GM12878 (cell line): ENCODE measurements at regions of chr20 and their contacts with region 1.

Region 1: GRCh38 chr20:17898548-17898994 is 70.0 kb downstream of the SNX5 start:
- DNase-seq: no peak
- ATAC-seq: peak; percentile 54
- H3K4me3 ChIP-seq: no peak overlapping the region
- H3K27ac ChIP-seq: no peak overlapping the region
- H3K4me1 ChIP-seq: peaks cover 35% of the 10 kb centered on the region
- H3K27me3 ChIP-seq: no peaks in the 10 kb centered on the region
- CTCF ChIP-seq: peak; percentile 89 to 94 (median 91)
- EP300 ChIP-seq: no peak
- POLR2A ChIP-seq: no peak
- RAD21 ChIP-seq: peak; percentile 100

Region 2: DNA sequence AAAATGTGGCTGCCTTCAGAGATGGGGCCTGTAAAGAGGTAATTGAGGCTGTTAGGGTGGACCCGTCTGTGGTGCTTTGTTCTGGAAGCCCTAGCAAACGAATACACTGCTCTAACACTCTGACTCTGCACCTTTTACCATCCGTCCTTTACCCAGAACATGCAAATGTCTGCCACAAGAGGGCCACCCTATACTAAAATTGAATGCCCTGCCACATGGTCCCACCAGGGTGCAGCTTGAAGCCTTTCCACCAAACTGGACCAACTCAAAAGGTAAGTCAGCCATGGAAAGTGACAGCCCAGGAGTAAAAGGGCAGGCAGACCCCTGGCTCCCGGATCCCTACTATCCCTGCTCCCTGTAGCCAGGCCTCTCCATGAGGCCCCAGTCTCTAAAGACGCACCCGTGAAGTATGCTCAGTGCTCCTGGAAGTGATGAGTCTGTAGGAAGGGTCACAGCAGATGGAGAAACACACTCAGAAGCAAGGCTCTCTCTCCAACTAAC is 361.6 kb before region 1 on chr20:
- CTCF ChIA-PET with region 1: interaction called, 20 read pairs
- POLR2A ChIA-PET with region 1: no interaction called
- RAD21 ChIA-PET with region 1: interaction called, 12 read pairs
- SMC1A ChIA-PET with region 1: interaction called, 14 read pairs
- in situ Hi-C with region 1: no loop called
- intact Hi-C with region 1: loop called (anchors 2 kb)
- DNase-seq: no peak
- ATAC-seq: peak; percentile 98
- H3K4me3 ChIP-seq: no peak overlapping the region
- H3K27ac ChIP-seq: no peak overlapping the region
- H3K4me1 ChIP-seq: peaks cover 6% of the 10 kb centered on the region
- H3K27me3 ChIP-seq: no peaks in the 10 kb centered on the region
- CTCF ChIP-seq: peak; percentile 83 to 93 (median 84)
- EP300 ChIP-seq: no peak
- POLR2A ChIP-seq: no peak
- RAD21 ChIP-seq: peak; percentile 95

Region 3: GRCh38 chr20:17825960-17826843 is 72.4 kb before region 1 on chr20:
- CTCF ChIA-PET with region 1: interaction called, 9 read pairs
- POLR2A ChIA-PET with region 1: interaction called, 5 read pairs
- RAD21 ChIA-PET with region 1: interaction called, 3 read pairs
- SMC1A ChIA-PET with region 1: interaction called, 6 read pairs
- in situ Hi-C with region 1: no loop called
- intact Hi-C with region 1: loop called (anchors 5 kb)
- DNase-seq: peak; percentile 74
- ATAC-seq: peak; percentile 96
- H3K4me3 ChIP-seq: no peak overlapping the region
- H3K27ac ChIP-seq: peak overlapping the region; percentile 69
- H3K4me1 ChIP-seq: peaks cover 18% of the 10 kb centered on the region
- H3K27me3 ChIP-seq: no peaks in the 10 kb centered on the region
- CTCF ChIP-seq: no peak
- EP300 ChIP-seq: peak; percentile 59 to 94; a peak in 3 of 4 replicates
- POLR2A ChIP-seq: no peak
- RAD21 ChIP-seq: peak; percentile 16; the same call in 1 of the 2 replicates

Region 4: GRCh38 chr20:17885544-17885943 is 13.0 kb before region 1 on chr20:
- CTCF ChIA-PET with region 1: interaction called, 3 read pairs
- POLR2A ChIA-PET with region 1: no interaction called
- RAD21 ChIA-PET with region 1: interaction called, 11 read pairs
- SMC1A ChIA-PET with region 1: interaction called, 10 read pairs
- in situ Hi-C with region 1: no loop called
- intact Hi-C with region 1: no loop called
- DNase-seq: no peak
- ATAC-seq: no peak
- H3K4me3 ChIP-seq: no peak overlapping the region
- H3K27ac ChIP-seq: no peak overlapping the region
- H3K4me1 ChIP-seq: no peaks in the 10 kb centered on the region
- H3K27me3 ChIP-seq: no peaks in the 10 kb centered on the region
- CTCF ChIP-seq: no peak
- EP300 ChIP-seq: no peak
- POLR2A ChIP-seq: no peak
- RAD21 ChIP-seq: no peak

Region 5: GRCh38 chr20:18005231-18006109 is 106.9 kb after region 1 on chr20:
- CTCF ChIA-PET with region 1: interaction called, 11 read pairs
- POLR2A ChIA-PET with region 1: no interaction called
- RAD21 ChIA-PET with region 1: interaction called, 7 read pairs
- SMC1A ChIA-PET with region 1: interaction called, 6 read pairs
- in situ Hi-C with region 1: no loop called
- intact Hi-C with region 1: no loop called
- DNase-seq: peak; percentile 66
- ATAC-seq: peak; percentile 97
- H3K4me3 ChIP-seq: no peak overlapping the region
- H3K27ac ChIP-seq: peak overlapping the region; percentile 82
- H3K4me1 ChIP-seq: peaks cover 31% of the 10 kb centered on the region
- H3K27me3 ChIP-seq: no peaks in the 10 kb centered on the region
- CTCF ChIP-seq: no peak
- EP300 ChIP-seq: peak; percentile 78 to 88
- POLR2A ChIP-seq: peak; percentile 60
- RAD21 ChIP-seq: no peak